ENCODE measurements at regions of chr10 and their contacts with region 1.

Region 1: GRCh38 chr10:4849555-4850242 is 23.7 kb downstream of the AKR1E2 start:
- DNase-seq: peak; percentile 96
- ATAC-seq: peak; percentile 89
- H3K4me3 ChIP-seq: no peak overlapping the region
- H3K27ac ChIP-seq: no peak overlapping the region
- H3K4me1 ChIP-seq: peaks cover 9% of the 10 kb centered on the region
- H3K27me3 ChIP-seq: no peaks in the 10 kb centered on the region
- CTCF ChIP-seq: peak; percentile 100; the same call in 1 of the 2 replicates
- POLR2A ChIP-seq: no peak
- RAD21 ChIP-seq: peak; percentile 100

Region 2: GRCh38 chr10:4947635-4948596 is 98.2 kb after region 1 on chr10:
- CTCF ChIA-PET with region 1: interaction called, 8 read pairs
- POLR2A ChIA-PET with region 1: no interaction called
- dilution Hi-C with region 1: no loop called
- in situ Hi-C with region 1: no loop called
- intact Hi-C with region 1: loop called (anchors 1 kb)
- DNase-seq: peak; percentile 97
- ATAC-seq: peak; percentile 80
- H3K4me3 ChIP-seq: no peak overlapping the region
- H3K27ac ChIP-seq: peak overlapping the region; percentile 94
- H3K4me1 ChIP-seq: peaks cover 22% of the 10 kb centered on the region
- H3K27me3 ChIP-seq: no peaks in the 10 kb centered on the region
- CTCF ChIP-seq: no peak
- POLR2A ChIP-seq: no peak
- RAD21 ChIP-seq: no peak

Region 3: GRCh38 chr10:5094265-5095205 is 244.8 kb after region 1 on chr10 and contains the start of gene AKR1C3:
- CTCF ChIA-PET with region 1: interaction called, 24 read pairs
- POLR2A ChIA-PET with region 1: no interaction called
- dilution Hi-C with region 1: no loop called
- in situ Hi-C with region 1: loop called (anchors 5 kb)
- intact Hi-C with region 1: loop called (anchors 1 kb)
- DNase-seq: peak; percentile 65
- ATAC-seq: peak; percentile 91
- H3K4me3 ChIP-seq: no peak within 1 kb of the TSS
- H3K27ac ChIP-seq: no peak within 1 kb of the TSS
- H3K4me1 ChIP-seq: no peaks in the 10 kb centered on the region
- H3K27me3 ChIP-seq: no peaks in the 10 kb centered on the region; the same call in none of the 2 replicates
- CTCF ChIP-seq: peak; percentile 63
- POLR2A ChIP-seq: no peak
- RAD21 ChIP-seq: peak; percentile 61
- total RNA-seq, gene AKR1C3: 0.18 and 0.28 TPM in 2 replicates

Region 4: DNA sequence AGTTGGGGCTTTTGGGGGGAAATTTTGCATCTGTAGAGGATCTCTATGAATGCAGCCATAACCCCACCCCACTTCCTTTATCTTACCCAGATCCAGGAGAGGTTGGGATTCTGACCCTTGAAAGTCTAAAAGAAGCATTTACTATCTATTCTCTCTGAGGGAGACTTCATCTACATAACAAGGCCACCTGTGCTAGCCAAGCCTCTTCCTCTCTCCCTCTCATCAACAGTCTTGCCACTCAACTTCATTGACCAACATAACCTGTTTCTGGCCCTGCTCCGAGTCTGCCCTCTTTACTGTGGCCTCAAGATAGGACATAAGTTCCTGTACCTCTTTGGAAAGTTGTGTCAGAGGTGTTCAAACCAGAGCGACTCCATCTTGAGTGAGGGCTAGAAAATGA is 535.5 kb after region 1 on chr10:
- CTCF ChIA-PET with region 1: interaction called, 4 read pairs
- POLR2A ChIA-PET with region 1: no interaction called
- dilution Hi-C with region 1: no loop called
- in situ Hi-C with region 1: loop called (anchors 10 kb)
- intact Hi-C with region 1: loop called (anchors 1 kb)
- DNase-seq: no peak
- ATAC-seq: no peak
- H3K4me3 ChIP-seq: no peak overlapping the region
- H3K27ac ChIP-seq: no peak overlapping the region
- H3K4me1 ChIP-seq: no peaks in the 10 kb centered on the region
- H3K27me3 ChIP-seq: peaks cover 7% of the 10 kb centered on the region
- CTCF ChIP-seq: no peak
- POLR2A ChIP-seq: no peak
- RAD21 ChIP-seq: no peak

Region 5: GRCh38 chr10:5623081-5623748 is 773.5 kb after region 1 on chr10:
- CTCF ChIA-PET with region 1: no interaction called
- POLR2A ChIA-PET with region 1: no interaction called
- dilution Hi-C with region 1: no loop called
- in situ Hi-C with region 1: loop called (anchors 25 kb)
- intact Hi-C with region 1: no loop called
- DNase-seq: peak; percentile 74
- ATAC-seq: peak; percentile 99
- H3K4me3 ChIP-seq: no peak overlapping the region
- H3K27ac ChIP-seq: peak overlapping the region; percentile 34; the same call in 1 of the 2 replicates
- H3K4me1 ChIP-seq: peaks cover 2% of the 10 kb centered on the region
- H3K27me3 ChIP-seq: no peaks in the 10 kb centered on the region
- CTCF ChIP-seq: peak; percentile 90
- POLR2A ChIP-seq: 0 out of 2 replicates have a peak, but pooled peaks have one; percentile 44
- RAD21 ChIP-seq: peak; percentile 99